Cardiac septum (tissue), 1 donor: ENCODE measurements at regions of chr3 and their contacts with region 1.

Region 1: GRCh38 chr3:120506828-120507774 is 56.3 kb upstream of the FSTL1 start:
- DNase-seq: no peak

Region 2: GRCh38 chr3:120348981-120349818 is 157.9 kb before region 1 on chr3 and contains the start of gene LRRC58:
- intact Hi-C with region 1: loop called (anchors 2 kb)
- DNase-seq: peak; percentile 93
- total RNA-seq, gene LRRC58: 8.1 TPM

Region 3: DNA sequence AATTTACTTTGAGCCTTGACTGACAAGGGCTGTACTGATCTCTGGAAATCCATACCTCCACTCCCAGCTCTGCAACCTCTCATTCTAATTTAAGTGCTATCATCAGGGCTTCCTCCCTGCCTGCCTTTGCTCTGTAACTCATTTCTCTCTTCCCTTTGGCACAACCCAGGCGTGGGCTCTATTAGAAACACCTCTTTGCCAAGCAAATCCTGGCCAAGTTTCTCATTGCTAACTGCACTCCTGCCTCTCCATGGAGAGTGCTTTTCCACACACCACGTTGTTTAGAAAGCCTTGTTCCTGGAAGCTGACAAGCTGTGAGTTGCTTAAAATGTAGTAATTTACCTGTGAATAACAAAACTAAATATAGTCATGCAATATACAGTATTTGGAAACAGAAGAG is 36.2 kb before region 1 on chr3:
- intact Hi-C with region 1: loop called (anchors 5 kb)
- DNase-seq: no peak